CD4-positive, alpha-beta T cell (primary cell): ENCODE measurements at regions of chr1 and their contacts with region 1.

Region 1: GRCh38 chr1:9234223-9235095 is at the start of gene H6PD:
- DNase-seq: peak; percentile 39 to 91 (median 66)
- ATAC-seq: peak; percentile 80
- H3K4me3 ChIP-seq: peak within 1 kb of the TSS; percentile 78
- H3K4me3 Mint-ChIP-seq: peak within 1 kb of the TSS; percentile 97
- H3K27ac ChIP-seq: peak within 1 kb of the TSS; percentile 59 to 68
- H3K27ac Mint-ChIP-seq: peak within 1 kb of the TSS; percentile 87
- H3K4me1 ChIP-seq: peaks cover 41% of the 10 kb centered on the region
- H3K4me1 Mint-ChIP-seq: peaks cover 37% of the 10 kb centered on the region
- H3K27me3 ChIP-seq: no peaks in the 10 kb centered on the region
- H3K27me3 Mint-ChIP-seq: no peaks in the 10 kb centered on the region
- CTCF ChIP-seq: peak; percentile 14
- total RNA-seq, gene H6PD: 13.6 to 13.9 TPM

Region 2: GRCh38 chr1:8817406-8818324 is 416.8 kb before region 1 on chr1 and contains the start of gene RERE:
- CTCF ChIA-PET with region 1: no interaction called
- POLR2A ChIA-PET with region 1: no interaction called
- intact Hi-C with region 1: loop called in 1 of 2 experiments (anchors 10 kb)
- DNase-seq: peak; percentile 93 to 99 (median 96)
- ATAC-seq: peak; percentile 95
- H3K4me3 ChIP-seq: peak within 1 kb of the TSS; percentile 96
- H3K4me3 Mint-ChIP-seq: peak within 1 kb of the TSS; percentile 92
- H3K27ac ChIP-seq: peak within 1 kb of the TSS; percentile 80 to 83
- H3K27ac Mint-ChIP-seq: peak within 1 kb of the TSS; percentile 86
- H3K4me1 ChIP-seq: peaks cover 20% of the 10 kb centered on the region
- H3K4me1 Mint-ChIP-seq: peaks cover 44% of the 10 kb centered on the region
- H3K27me3 ChIP-seq: peaks cover 0 to 4% of the 10 kb centered on the region in 2 experiments
- H3K27me3 Mint-ChIP-seq: peaks cover 11% of the 10 kb centered on the region
- CTCF ChIP-seq: no peak
- total RNA-seq, gene RERE: 78.4 to 84.0 TPM

Region 3: DNA sequence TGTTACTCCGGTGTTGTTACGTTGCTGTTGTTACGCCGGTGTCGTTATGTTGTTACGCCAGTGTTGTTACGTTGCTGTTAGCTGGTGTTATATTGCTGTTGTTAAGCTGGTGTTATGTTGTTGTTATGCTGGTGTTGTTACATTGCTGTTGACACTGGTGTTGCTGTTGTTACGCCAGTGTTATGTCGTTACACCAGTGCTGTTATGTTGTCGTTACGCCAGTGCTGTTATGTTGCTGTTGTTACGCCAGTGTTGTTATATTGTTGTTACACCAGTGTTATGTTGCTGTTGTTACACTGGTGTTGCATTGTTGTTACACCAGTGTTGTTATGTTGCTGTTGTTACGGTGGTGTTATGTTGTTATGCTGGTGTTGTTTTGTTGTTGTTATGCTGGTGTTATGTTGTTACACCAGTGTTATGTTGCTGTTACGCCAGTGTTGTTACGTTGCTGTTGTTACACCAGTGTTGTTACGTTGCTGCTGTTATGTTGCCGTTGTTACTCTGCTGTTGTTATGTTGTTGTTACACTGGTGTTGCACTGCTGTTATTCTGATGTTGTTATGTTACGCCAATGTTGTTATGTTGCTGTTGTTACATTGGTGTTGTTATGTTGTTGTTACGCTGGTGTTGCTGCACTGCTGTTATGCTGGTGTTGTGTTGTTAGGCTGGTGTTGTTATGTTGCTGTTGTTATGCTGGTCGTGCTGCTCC is 25.8 kb after region 1 on chr1:
- CTCF ChIA-PET with region 1: no interaction called
- POLR2A ChIA-PET with region 1: no interaction called
- intact Hi-C with region 1: no loop called
- DNase-seq: no peak
- ATAC-seq: no peak
- H3K4me3 ChIP-seq: no peak overlapping the region
- H3K4me3 Mint-ChIP-seq: no peak overlapping the region
- H3K27ac ChIP-seq: no peak overlapping the region
- H3K27ac Mint-ChIP-seq: no peak overlapping the region
- H3K4me1 ChIP-seq: peaks cover 6% of the 10 kb centered on the region
- H3K4me1 Mint-ChIP-seq: peaks cover 30% of the 10 kb centered on the region
- H3K27me3 ChIP-seq: no peaks in the 10 kb centered on the region
- H3K27me3 Mint-ChIP-seq: no peaks in the 10 kb centered on the region
- CTCF ChIP-seq: no peak

Region 4: GRCh38 chr1:9292361-9293240 is 58.1 kb after region 1 on chr1 and contains the start of gene SPSB1:
- CTCF ChIA-PET with region 1: interaction called, 7 read pairs
- POLR2A ChIA-PET with region 1: interaction called, 3 read pairs
- intact Hi-C with region 1: loop called in 1 of 2 experiments (anchors 5 kb)
- DNase-seq: peak; percentile 48 to 87 (median 64)
- ATAC-seq: peak; percentile 62
- H3K4me3 ChIP-seq: peak within 1 kb of the TSS; percentile 77
- H3K4me3 Mint-ChIP-seq: peak within 1 kb of the TSS; percentile 86
- H3K27ac ChIP-seq: no peak within 1 kb of the TSS
- H3K27ac Mint-ChIP-seq: peak within 1 kb of the TSS; percentile 48
- H3K4me1 ChIP-seq: peaks cover 33% of the 10 kb centered on the region
- H3K4me1 Mint-ChIP-seq: peaks cover 29% of the 10 kb centered on the region
- H3K27me3 ChIP-seq: no peaks in the 10 kb centered on the region
- H3K27me3 Mint-ChIP-seq: no peaks in the 10 kb centered on the region
- CTCF ChIP-seq: no peak
- total RNA-seq, gene SPSB1: 1.9 to 2.3 TPM

Region 5: DNA sequence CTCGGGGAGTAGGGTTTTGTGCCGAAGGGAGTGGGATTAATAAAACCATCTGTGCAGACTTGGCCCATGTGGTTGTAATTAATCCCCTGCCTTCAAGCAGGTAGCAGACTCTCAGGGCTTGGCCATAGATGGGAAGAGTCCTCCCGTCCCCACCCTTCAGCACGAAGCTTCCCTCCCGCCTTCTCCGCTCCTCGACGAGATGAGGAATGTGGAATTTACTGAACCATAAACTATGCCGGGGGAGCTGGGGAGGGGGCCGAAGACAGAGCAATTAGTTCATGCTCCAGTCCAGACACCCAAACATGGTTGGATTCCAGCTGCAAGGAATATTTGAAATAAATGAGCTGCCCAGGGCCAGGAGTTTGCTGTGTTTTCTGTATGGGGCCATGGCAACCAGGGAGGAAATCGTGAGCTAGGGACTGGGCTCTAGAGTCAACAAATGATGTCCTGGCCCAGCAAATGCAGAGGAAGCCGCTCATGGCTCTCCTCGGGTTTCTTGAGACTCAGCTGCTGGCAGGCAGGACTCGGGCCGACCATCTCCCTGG is 137.0 kb after region 1 on chr1:
- CTCF ChIA-PET with region 1: no interaction called
- POLR2A ChIA-PET with region 1: no interaction called
- intact Hi-C with region 1: no loop called
- DNase-seq: no peak
- ATAC-seq: no peak
- H3K4me3 ChIP-seq: no peak overlapping the region
- H3K4me3 Mint-ChIP-seq: no peak overlapping the region
- H3K27ac ChIP-seq: no peak overlapping the region
- H3K27ac Mint-ChIP-seq: no peak overlapping the region
- H3K4me1 ChIP-seq: peaks cover 12% of the 10 kb centered on the region
- H3K4me1 Mint-ChIP-seq: peaks cover 10% of the 10 kb centered on the region
- H3K27me3 ChIP-seq: no peaks in the 10 kb centered on the region
- H3K27me3 Mint-ChIP-seq: no peaks in the 10 kb centered on the region
- CTCF ChIP-seq: no peak

Region 6: DNA sequence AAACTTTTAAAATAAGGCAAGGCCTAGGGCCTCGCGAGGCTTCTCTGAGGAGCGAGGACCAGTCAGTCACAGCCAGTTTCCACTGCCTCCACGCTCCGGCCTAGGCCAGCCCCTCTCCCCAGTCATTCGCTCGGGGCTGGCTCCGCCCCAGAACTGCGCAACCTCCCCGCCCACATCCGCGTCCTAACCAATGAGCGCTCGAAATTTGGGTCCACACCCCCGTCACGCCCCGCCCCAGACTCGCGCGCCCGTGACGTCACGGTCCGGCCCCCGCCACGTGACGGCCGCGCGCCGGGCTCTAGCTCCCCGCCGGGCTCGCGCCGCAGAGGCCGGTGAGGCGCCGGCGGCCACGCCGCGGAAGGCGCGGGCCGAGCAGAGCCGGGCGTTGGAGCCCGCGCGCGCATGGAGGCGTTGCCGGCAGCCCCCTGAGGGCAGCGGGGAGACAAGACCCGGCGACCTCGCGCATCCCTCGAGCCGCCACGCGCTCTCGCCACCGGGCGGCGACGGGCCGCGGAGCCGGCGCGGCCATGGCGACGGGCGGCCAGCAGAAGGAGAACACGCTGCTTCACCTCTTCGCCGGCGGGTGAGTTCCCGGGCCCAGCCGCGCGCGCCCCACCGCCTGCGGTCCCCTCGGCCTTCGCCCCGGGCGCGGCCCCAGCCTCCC is 304.8 kb after region 1 on chr1 and contains the start of gene SLC25A33:
- CTCF ChIA-PET with region 1: no interaction called
- POLR2A ChIA-PET with region 1: no interaction called
- intact Hi-C with region 1: loop called in 1 of 2 experiments (anchors 5 kb)
- DNase-seq: peak; percentile 92 to 98 (median 95)
- ATAC-seq: peak; percentile 97
- H3K4me3 ChIP-seq: peak within 1 kb of the TSS; percentile 70
- H3K4me3 Mint-ChIP-seq: peak within 1 kb of the TSS; percentile 91
- H3K27ac ChIP-seq: peak within 1 kb of the TSS in 1 of 2 donors; percentile 69
- H3K27ac Mint-ChIP-seq: peak within 1 kb of the TSS; percentile 90
- H3K4me1 ChIP-seq: peaks cover 33% of the 10 kb centered on the region
- H3K4me1 Mint-ChIP-seq: peaks cover 33% of the 10 kb centered on the region
- H3K27me3 ChIP-seq: no peaks in the 10 kb centered on the region
- H3K27me3 Mint-ChIP-seq: no peaks in the 10 kb centered on the region
- CTCF ChIP-seq: no peak
- total RNA-seq, gene SLC25A33: 5.9 to 6.6 TPM

Region 7: GRCh38 chr1:9823943-9824701 is 589.7 kb after region 1 on chr1 and contains the start of gene CLSTN1:
- CTCF ChIA-PET with region 1: no interaction called
- POLR2A ChIA-PET with region 1: no interaction called
- intact Hi-C with region 1: loop called in 1 of 2 experiments (anchors 5 kb)
- DNase-seq: peak; percentile 86 to 94 (median 90)
- ATAC-seq: peak; percentile 74
- H3K4me3 ChIP-seq: peak within 1 kb of the TSS; percentile 87
- H3K4me3 Mint-ChIP-seq: peak within 1 kb of the TSS; percentile 99
- H3K27ac ChIP-seq: peak within 1 kb of the TSS; percentile 57 to 67
- H3K27ac Mint-ChIP-seq: peak within 1 kb of the TSS; percentile 94
- H3K4me1 ChIP-seq: peaks cover 40% of the 10 kb centered on the region
- H3K4me1 Mint-ChIP-seq: peaks cover 43% of the 10 kb centered on the region
- H3K27me3 ChIP-seq: no peaks in the 10 kb centered on the region
- H3K27me3 Mint-ChIP-seq: no peaks in the 10 kb centered on the region
- CTCF ChIP-seq: no peak
- total RNA-seq, gene CLSTN1: 66.8 to 68.1 TPM